ENCODE measurements at regions of chr3 and their contacts with region 1.

Region 1: GRCh38 chr3:25863416-25863959 is 73.6 kb downstream of the OXSM start:
- DNase-seq: no peak
- ATAC-seq: no peak
- H3K4me3 ChIP-seq: no peak overlapping the region
- H3K4me3 Mint-ChIP-seq: no peak overlapping the region
- H3K27ac ChIP-seq: no peak overlapping the region
- H3K27ac Mint-ChIP-seq: no peak overlapping the region
- H3K4me1 ChIP-seq: no peaks in the 10 kb centered on the region
- H3K4me1 Mint-ChIP-seq: no peaks in the 10 kb centered on the region
- H3K27me3 ChIP-seq: no peaks in the 10 kb centered on the region
- H3K27me3 Mint-ChIP-seq: no peaks in the 10 kb centered on the region
- CTCF ChIP-seq: no peak

Region 2: DNA sequence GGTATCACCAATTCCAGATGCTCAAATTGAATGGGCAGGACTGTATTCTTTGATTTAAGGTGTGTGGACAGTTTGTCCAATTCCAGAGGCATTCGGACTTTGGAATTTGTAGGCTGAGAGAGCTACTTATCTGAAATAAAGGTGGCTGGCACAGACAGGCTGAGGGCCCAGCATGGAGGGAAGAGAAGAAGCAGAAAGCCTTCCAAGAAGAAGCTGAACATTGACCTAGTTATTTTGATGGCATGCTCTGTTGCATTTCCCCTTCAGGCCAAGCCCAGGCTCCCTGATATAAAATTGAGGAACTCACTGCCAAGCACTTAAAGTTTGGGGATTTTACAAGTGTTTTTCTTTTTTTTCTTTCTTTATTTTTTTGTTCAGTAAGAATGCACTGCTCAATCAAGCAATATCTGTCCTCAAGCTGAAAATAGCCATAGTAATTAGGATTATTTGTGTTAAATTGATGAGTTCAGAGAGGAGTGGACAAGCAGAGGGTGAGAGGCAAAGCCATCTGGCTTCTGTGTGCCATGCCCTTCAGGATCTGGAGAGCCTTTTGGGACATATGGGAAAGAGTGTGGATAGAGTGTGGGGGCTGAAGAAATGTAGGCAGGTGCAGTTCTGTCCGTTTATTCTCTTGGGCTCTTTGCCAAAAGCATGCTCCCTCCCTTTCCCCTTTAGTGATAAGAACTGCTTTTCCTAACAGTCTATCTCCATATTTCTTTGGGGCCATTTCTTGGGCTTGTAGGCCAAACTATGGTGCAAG is 75.3 kb after region 1 on chr3:
- CTCF ChIA-PET with region 1: no interaction called
- POLR2A ChIA-PET with region 1: no interaction called
- intact Hi-C with region 1: no loop called
- DNase-seq: no peak
- ATAC-seq: no peak
- H3K4me3 ChIP-seq: no peak overlapping the region
- H3K4me3 Mint-ChIP-seq: no peak overlapping the region
- H3K27ac ChIP-seq: no peak overlapping the region
- H3K27ac Mint-ChIP-seq: no peak overlapping the region
- H3K4me1 ChIP-seq: no peaks in the 10 kb centered on the region
- H3K4me1 Mint-ChIP-seq: no peaks in the 10 kb centered on the region
- H3K27me3 ChIP-seq: no peaks in the 10 kb centered on the region
- H3K27me3 Mint-ChIP-seq: no peaks in the 10 kb centered on the region
- CTCF ChIP-seq: no peak

Region 3: DNA sequence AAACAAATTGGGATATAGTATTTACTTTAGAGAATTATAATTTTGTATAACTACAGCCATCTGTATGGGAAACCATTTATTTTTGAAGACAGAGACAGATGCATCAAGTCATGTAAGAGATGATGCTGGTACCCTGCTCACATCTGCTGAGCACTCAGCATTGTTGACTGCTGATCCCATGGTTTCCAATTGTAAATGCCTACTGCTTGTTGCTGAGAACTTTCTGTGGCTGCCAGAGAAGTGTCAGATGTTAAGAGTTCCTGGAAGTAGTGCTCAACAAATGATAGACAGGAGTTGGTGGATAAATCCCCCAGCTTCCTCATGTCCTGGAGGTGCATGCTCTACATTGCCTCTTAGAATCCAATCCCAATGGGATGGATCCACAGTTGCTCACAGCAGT is 93.5 kb after region 1 on chr3:
- CTCF ChIA-PET with region 1: no interaction called
- POLR2A ChIA-PET with region 1: no interaction called
- intact Hi-C with region 1: no loop called
- DNase-seq: no peak
- ATAC-seq: no peak
- H3K4me3 ChIP-seq: no peak overlapping the region
- H3K4me3 Mint-ChIP-seq: no peak overlapping the region
- H3K27ac ChIP-seq: no peak overlapping the region
- H3K27ac Mint-ChIP-seq: no peak overlapping the region
- H3K4me1 ChIP-seq: no peaks in the 10 kb centered on the region
- H3K4me1 Mint-ChIP-seq: no peaks in the 10 kb centered on the region
- H3K27me3 ChIP-seq: no peaks in the 10 kb centered on the region
- H3K27me3 Mint-ChIP-seq: peaks cover 5% of the 10 kb centered on the region
- CTCF ChIP-seq: no peak

Region 4: GRCh38 chr3:26084629-26085028 is 221.1 kb after region 1 on chr3:
- CTCF ChIA-PET with region 1: no interaction called
- POLR2A ChIA-PET with region 1: no interaction called
- intact Hi-C with region 1: no loop called
- DNase-seq: no peak
- ATAC-seq: no peak
- H3K4me3 ChIP-seq: no peak overlapping the region
- H3K4me3 Mint-ChIP-seq: no peak overlapping the region
- H3K27ac ChIP-seq: no peak overlapping the region
- H3K27ac Mint-ChIP-seq: no peak overlapping the region
- H3K4me1 ChIP-seq: no peaks in the 10 kb centered on the region
- H3K4me1 Mint-ChIP-seq: no peaks in the 10 kb centered on the region
- H3K27me3 ChIP-seq: no peaks in the 10 kb centered on the region
- H3K27me3 Mint-ChIP-seq: no peaks in the 10 kb centered on the region
- CTCF ChIP-seq: no peak

Region 5: GRCh38 chr3:26264708-26265107 is 401.2 kb after region 1 on chr3:
- CTCF ChIA-PET with region 1: no interaction called
- POLR2A ChIA-PET with region 1: no interaction called
- intact Hi-C with region 1: loop called (anchors 5 kb)
- DNase-seq: no peak
- ATAC-seq: no peak
- H3K4me3 ChIP-seq: no peak overlapping the region
- H3K4me3 Mint-ChIP-seq: no peak overlapping the region
- H3K27ac ChIP-seq: no peak overlapping the region
- H3K27ac Mint-ChIP-seq: no peak overlapping the region
- H3K4me1 ChIP-seq: no peaks in the 10 kb centered on the region
- H3K4me1 Mint-ChIP-seq: no peaks in the 10 kb centered on the region
- H3K27me3 ChIP-seq: no peaks in the 10 kb centered on the region
- H3K27me3 Mint-ChIP-seq: no peaks in the 10 kb centered on the region
- CTCF ChIP-seq: no peak